CD8-positive, alpha-beta T cell (primary cell): ENCODE measurements at regions of chr22 and their contacts with region 1.

Region 1: GRCh38 chr22:41780746-41781505 is 19.6 kb upstream of the CCDC134 start:
- DNase-seq: peak; percentile 77 to 99 (median 90)
- ATAC-seq: peak; percentile 92
- H3K4me3 ChIP-seq: peak overlapping the region; percentile 64 to 69
- H3K4me3 Mint-ChIP-seq: peak overlapping the region; percentile 89
- H3K27ac ChIP-seq: peak overlapping the region; percentile 86
- H3K27ac Mint-ChIP-seq: peak overlapping the region; percentile 99
- H3K4me1 ChIP-seq: peaks cover 32% of the 10 kb centered on the region
- H3K4me1 Mint-ChIP-seq: peaks cover 57% of the 10 kb centered on the region
- H3K27me3 ChIP-seq: no peaks in the 10 kb centered on the region
- H3K27me3 Mint-ChIP-seq: no peaks in the 10 kb centered on the region
- CTCF ChIP-seq: no peak

Region 2: GRCh38 chr22:41672775-41673509 is 108.0 kb before region 1 on chr22:
- CTCF ChIA-PET with region 1: no interaction called
- POLR2A ChIA-PET with region 1: no interaction called
- intact Hi-C with region 1: no loop called
- DNase-seq: peak in 1 of 9 experiments; percentile 35
- ATAC-seq: no peak
- H3K4me3 ChIP-seq: no peak overlapping the region
- H3K4me3 Mint-ChIP-seq: no peak overlapping the region
- H3K27ac ChIP-seq: no peak overlapping the region
- H3K27ac Mint-ChIP-seq: peak overlapping the region; percentile 37
- H3K4me1 ChIP-seq: no peaks in the 10 kb centered on the region
- H3K4me1 Mint-ChIP-seq: peaks cover 18% of the 10 kb centered on the region
- H3K27me3 ChIP-seq: no peaks in the 10 kb centered on the region
- H3K27me3 Mint-ChIP-seq: no peaks in the 10 kb centered on the region
- CTCF ChIP-seq: no peak

Region 3: DNA sequence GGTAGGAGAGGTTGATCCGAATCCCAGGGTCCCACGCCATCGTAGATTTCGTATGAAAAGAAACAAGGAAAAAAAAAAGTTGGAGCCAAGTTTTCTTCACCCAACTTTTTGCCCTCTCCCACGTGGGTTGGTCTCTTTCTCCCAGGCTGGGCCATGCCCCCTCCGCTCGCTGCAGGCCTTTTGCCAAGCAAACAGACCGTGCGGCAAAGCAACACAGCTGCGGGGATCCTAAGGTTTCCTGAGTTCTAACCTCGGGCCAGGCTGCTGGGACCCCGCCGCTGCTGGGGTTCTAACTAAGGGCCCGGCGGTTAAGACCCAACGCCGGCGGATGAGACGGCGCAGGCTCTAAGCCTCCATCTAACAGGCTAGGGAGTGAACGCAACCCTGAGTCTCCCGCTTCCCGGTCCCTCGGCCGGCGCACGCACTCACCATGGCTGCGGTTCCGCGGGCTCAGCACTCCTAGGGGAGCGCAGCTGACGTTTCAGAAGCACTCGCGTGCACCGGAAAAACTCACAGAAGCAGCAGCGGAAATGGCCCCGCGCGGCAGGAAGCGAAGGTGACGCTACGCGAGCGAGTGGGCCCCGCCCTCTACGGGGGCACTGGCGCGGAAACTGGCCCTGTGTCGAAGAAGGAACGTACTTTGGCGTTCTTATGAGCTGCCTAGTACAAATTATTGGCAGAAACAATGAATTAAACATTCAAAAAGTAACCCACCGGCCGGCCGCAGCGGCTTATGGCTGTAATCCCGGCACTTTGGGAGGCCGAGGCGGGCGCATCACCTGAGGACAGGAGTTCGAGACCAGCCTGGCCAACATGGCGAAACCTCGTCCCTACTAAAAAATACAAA is 92.3 kb before region 1 on chr22 and contains the start of gene SNU13:
- CTCF ChIA-PET with region 1: interaction called, 4 read pairs
- POLR2A ChIA-PET with region 1: interaction called, 9 read pairs
- intact Hi-C with region 1: loop called in 1 of 2 experiments (anchors 2 kb)
- DNase-seq: peak; percentile 84 to 97 (median 93)
- ATAC-seq: peak; percentile 92
- H3K4me3 ChIP-seq: peak within 1 kb of the TSS; percentile 90 to 96
- H3K4me3 Mint-ChIP-seq: peak within 1 kb of the TSS; percentile 90
- H3K27ac ChIP-seq: peak within 1 kb of the TSS; percentile 97
- H3K27ac Mint-ChIP-seq: peak within 1 kb of the TSS; percentile 95
- H3K4me1 ChIP-seq: peaks cover 17% of the 10 kb centered on the region
- H3K4me1 Mint-ChIP-seq: peaks cover 30% of the 10 kb centered on the region
- H3K27me3 ChIP-seq: no peaks in the 10 kb centered on the region
- H3K27me3 Mint-ChIP-seq: no peaks in the 10 kb centered on the region
- CTCF ChIP-seq: no peak
- total RNA-seq, gene SNU13: 158 to 173 TPM